ENCODE measurements at regions of chrX and their contacts with region 1.

Region 1: GRCh38 chrX:153947009-153947769 is 2.7 kb upstream of the RENBP start:
- DNase-seq: peak; percentile 75 to 85 (median 84)
- ATAC-seq: peak; percentile 84 to 92 (median 88)
- H3K4me3 ChIP-seq: no peak overlapping the region
- H3K27ac ChIP-seq: peak overlapping the region in 1 of 3 donors; percentile 13
- H3K4me1 ChIP-seq: no peaks in the 10 kb centered on the region
- H3K27me3 ChIP-seq: no peaks in the 10 kb centered on the region
- CTCF ChIP-seq: peak; percentile 76 to 97 (median 94)
- POLR2A ChIP-seq: no peak

Region 2: GRCh38 chrX:153507484-153508178 is 439.6 kb before region 1 on chrX:
- intact Hi-C with region 1: no loop called
- DNase-seq: peak; percentile 75 to 86 (median 83)
- ATAC-seq: peak; percentile 82 to 94 (median 94)
- H3K4me3 ChIP-seq: no peak overlapping the region
- H3K27ac ChIP-seq: no peak overlapping the region
- H3K4me1 ChIP-seq: no peaks in the 10 kb centered on the region
- H3K27me3 ChIP-seq: no peaks in the 10 kb centered on the region
- CTCF ChIP-seq: peak; percentile 89 to 95 (median 92)
- POLR2A ChIP-seq: no peak

Region 3: DNA sequence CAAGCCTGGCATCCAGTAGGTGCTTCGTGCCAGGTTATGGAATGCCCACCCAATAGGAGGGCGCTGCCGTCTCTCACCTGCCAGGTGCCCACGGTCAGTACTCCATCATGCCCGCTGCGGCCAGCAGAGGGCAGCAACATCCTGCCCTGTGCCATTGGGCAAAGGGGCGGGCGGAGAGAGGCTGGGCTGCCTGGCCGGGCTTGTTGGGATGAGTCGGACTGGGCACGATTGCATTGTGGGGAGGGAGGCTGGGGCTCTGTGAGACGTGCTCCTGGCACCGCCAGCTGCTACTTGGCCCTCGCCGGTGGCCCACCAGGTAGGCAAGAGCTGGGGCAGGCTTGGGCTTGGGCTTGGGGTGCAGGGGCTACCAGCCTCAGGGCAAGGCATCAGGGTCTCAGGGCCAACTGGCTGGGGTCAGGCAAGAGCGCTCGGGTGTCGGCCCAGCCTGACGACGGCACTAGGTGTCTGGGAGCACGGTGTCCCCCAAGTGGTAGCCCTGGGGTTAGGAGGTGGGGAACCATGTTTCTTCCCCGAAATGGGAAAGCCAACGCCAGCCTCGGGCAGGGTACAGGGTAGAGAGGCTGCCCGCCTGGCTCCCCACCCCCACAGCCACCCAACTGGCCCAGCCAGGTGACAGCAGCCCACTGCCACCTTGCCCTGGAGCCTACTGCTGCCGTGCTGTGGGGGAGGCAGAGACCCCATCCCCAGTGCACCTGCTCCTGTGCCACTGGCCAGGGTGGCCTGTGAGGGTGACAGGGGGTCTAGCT is 183.0 kb before region 1 on chrX and contains the start of gene PLXNB3:
- intact Hi-C with region 1: loop called (anchors 5 kb)
- DNase-seq: peak; percentile 74 to 86 (median 86)
- ATAC-seq: peak; percentile 85 to 94 (median 92)
- H3K4me3 ChIP-seq: no peak within 1 kb of the TSS
- H3K27ac ChIP-seq: no peak within 1 kb of the TSS
- H3K4me1 ChIP-seq: no peaks in the 10 kb centered on the region
- H3K27me3 ChIP-seq: no peaks in the 10 kb centered on the region
- CTCF ChIP-seq: peak; percentile 82 to 93 (median 90)
- POLR2A ChIP-seq: no peak
- total RNA-seq, gene PLXNB3: 0.55 to 1.7 (median 0.94) TPM

Region 4: DNA sequence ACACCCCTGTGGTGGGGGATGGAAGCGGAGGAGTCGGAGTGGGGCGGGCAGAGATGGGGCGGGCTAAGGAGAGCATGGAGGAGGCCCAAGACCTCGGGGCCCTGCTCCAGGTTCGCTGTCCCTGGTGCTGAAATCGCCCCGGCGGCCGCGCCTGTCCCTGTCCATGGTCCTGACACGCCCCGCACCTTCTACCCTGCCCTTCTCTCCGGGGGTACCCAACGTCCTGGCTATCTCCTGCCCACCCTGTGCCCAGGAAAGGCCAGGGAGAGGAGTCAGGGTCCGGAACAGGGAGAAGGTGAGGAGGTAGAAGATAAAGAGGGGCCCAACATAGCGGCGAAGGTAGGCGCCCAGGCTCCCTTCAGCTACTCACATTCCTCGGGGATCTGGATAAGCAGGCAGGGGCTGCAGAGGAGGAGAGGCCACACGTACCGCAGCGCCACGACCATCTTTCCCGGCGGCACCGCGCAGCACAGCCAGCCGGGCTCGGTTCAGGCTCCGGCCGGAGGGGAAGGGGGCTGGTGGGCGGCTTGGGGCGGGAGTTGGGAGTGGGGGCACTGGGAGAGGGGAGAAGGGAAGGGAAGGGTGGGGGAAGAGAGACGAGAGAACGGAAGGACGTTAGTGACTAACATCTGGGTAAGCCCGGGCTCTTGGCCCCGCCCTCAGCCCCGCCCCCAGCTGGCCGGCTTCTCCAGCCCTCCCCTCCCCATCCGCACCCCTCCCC is 71.6 kb before region 1 on chrX:
- intact Hi-C with region 1: no loop called
- DNase-seq: peak in 1 of 3 donors; percentile 48
- ATAC-seq: peak; percentile 58 to 83 (median 71)
- H3K4me3 ChIP-seq: no peak overlapping the region
- H3K27ac ChIP-seq: no peak overlapping the region
- H3K4me1 ChIP-seq: no peaks in the 10 kb centered on the region
- H3K27me3 ChIP-seq: peaks cover 0 to 4% of the 10 kb centered on the region in 2 donors
- CTCF ChIP-seq: no peak
- POLR2A ChIP-seq: no peak